K562 (cell line): ENCODE measurements at regions of chr3 and their contacts with region 1.

Region 1: GRCh38 chr3:21564531-21564930 is 186.5 kb downstream of the ZNF385D start:
- DNase-seq: no peak
- ATAC-seq: no peak
- H3K4me3 ChIP-seq: no peak overlapping the region
- H3K27ac ChIP-seq: no peak overlapping the region
- H3K4me1 ChIP-seq: no peaks in the 10 kb centered on the region
- H3K27me3 ChIP-seq: no peaks in the 10 kb centered on the region
- CTCF ChIP-seq: no peak
- EP300 ChIP-seq: no peak
- POLR2A ChIP-seq: no peak
- RAD21 ChIP-seq: no peak

Region 2: GRCh38 chr3:21509731-21510470 is 54.6 kb before region 1 on chr3:
- CTCF ChIA-PET with region 1: no interaction called
- POLR2A ChIA-PET with region 1: no interaction called
- in situ Hi-C with region 1: no loop called
- intact Hi-C with region 1: no loop called
- DNase-seq: no peak
- ATAC-seq: no peak
- H3K4me3 ChIP-seq: no peak overlapping the region
- H3K27ac ChIP-seq: no peak overlapping the region
- H3K4me1 ChIP-seq: no peaks in the 10 kb centered on the region
- H3K27me3 ChIP-seq: no peaks in the 10 kb centered on the region
- CTCF ChIP-seq: no peak
- EP300 ChIP-seq: no peak
- POLR2A ChIP-seq: no peak
- RAD21 ChIP-seq: no peak

Region 3: GRCh38 chr3:21543380-21544075 is 21.0 kb before region 1 on chr3:
- CTCF ChIA-PET with region 1: no interaction called
- POLR2A ChIA-PET with region 1: no interaction called
- in situ Hi-C with region 1: no loop called
- intact Hi-C with region 1: loop called (anchors 1 kb)
- DNase-seq: peak in 2 of 4 experiments; percentile 15 to 34
- ATAC-seq: peak; percentile 64
- H3K4me3 ChIP-seq: peak overlapping the region; percentile 50
- H3K27ac ChIP-seq: peak overlapping the region; percentile 76
- H3K4me1 ChIP-seq: no peaks in the 10 kb centered on the region; a peak in 1 of 5 replicates
- H3K27me3 ChIP-seq: no peaks in the 10 kb centered on the region
- CTCF ChIP-seq: no peak; a peak in 1 of 6 replicates
- EP300 ChIP-seq: no peak
- POLR2A ChIP-seq: no peak
- RAD21 ChIP-seq: peak in 1 of 2 experiments; percentile 17; a peak in 1 of 4 replicates

Region 4: GRCh38 chr3:21920421-21920861 is 355.9 kb after region 1 on chr3:
- CTCF ChIA-PET with region 1: no interaction called
- POLR2A ChIA-PET with region 1: no interaction called
- in situ Hi-C with region 1: no loop called
- intact Hi-C with region 1: no loop called
- DNase-seq: no peak
- ATAC-seq: no peak
- H3K4me3 ChIP-seq: no peak overlapping the region
- H3K27ac ChIP-seq: no peak overlapping the region
- H3K4me1 ChIP-seq: no peaks in the 10 kb centered on the region
- H3K27me3 ChIP-seq: no peaks in the 10 kb centered on the region
- CTCF ChIP-seq: no peak
- EP300 ChIP-seq: no peak
- POLR2A ChIP-seq: no peak
- RAD21 ChIP-seq: no peak